ENCODE measurements at regions of chr16 and their contacts with region 1.

Region 1: DNA sequence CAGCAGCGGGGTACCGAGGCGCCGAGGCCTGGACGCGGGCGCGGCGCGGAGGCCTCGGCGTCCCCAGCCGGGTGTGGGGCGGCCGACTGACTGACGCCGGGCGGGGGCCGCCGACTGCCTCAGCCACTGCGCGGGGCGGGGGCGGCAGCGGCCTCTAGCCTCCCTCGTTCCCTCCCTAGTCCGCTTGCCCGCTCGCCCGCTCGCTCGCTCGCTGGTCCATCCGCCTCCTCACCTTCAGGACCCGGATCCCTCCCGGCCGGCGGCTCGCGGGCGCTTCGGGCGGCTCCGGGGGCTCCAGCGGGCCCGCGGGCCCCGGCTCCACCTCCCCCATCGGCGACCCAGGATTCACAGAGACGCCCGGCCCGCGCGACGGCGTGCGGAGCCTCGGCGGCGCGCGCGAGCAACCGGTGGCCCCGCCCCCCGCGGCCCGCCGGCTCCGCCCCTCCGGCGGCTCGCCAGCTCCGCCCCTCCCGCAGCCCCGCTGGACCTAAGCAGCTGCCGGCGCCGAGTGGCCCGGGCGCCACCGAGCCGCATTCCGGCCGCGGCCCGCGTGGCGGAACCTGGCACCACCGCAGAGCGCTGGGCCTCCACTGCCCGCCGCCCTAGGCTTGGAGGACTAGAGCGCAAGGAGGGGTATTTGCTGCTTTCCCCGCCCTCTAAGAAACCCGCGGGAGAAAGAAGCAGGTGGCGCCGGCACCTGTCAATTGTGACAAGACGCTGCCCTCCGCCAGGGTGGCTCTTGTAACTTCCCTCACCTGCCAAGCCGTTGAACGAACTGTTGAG is 773 bp downstream of the PHLPP2 start:
- DNase-seq: peak; percentile 76 to 90
- H3K4me3 ChIP-seq: peak overlapping the region; percentile 62
- H3K4me3 Mint-ChIP-seq: peak overlapping the region; percentile 89
- H3K27ac Mint-ChIP-seq: peak overlapping the region; percentile 27
- H3K4me1 ChIP-seq: peaks cover 21% of the 10 kb centered on the region
- H3K4me1 Mint-ChIP-seq: peaks cover 8% of the 10 kb centered on the region
- H3K27me3 ChIP-seq: no peaks in the 10 kb centered on the region
- H3K27me3 Mint-ChIP-seq: no peaks in the 10 kb centered on the region
- CTCF ChIP-seq: peak in 1 of 2 experiments; percentile 6

Region 2: GRCh38 chr16:71669932-71670536 is 53.7 kb before region 1 on chr16:
- CTCF ChIA-PET with region 1: no interaction called
- POLR2A ChIA-PET with region 1: no interaction called
- intact Hi-C with region 1: loop called (anchors 2 kb)
- DNase-seq: peak in 1 of 2 experiments; percentile 27
- H3K4me3 ChIP-seq: no peak overlapping the region
- H3K4me3 Mint-ChIP-seq: no peak overlapping the region
- H3K27ac Mint-ChIP-seq: peak overlapping the region; percentile 23
- H3K4me1 ChIP-seq: peaks cover 58% of the 10 kb centered on the region
- H3K4me1 Mint-ChIP-seq: peaks cover 45% of the 10 kb centered on the region
- H3K27me3 ChIP-seq: no peaks in the 10 kb centered on the region
- H3K27me3 Mint-ChIP-seq: no peaks in the 10 kb centered on the region
- CTCF ChIP-seq: peak in 1 of 2 experiments; percentile 35

Region 3: GRCh38 chr16:71734511-71734910 is 10.8 kb after region 1 on chr16:
- CTCF ChIA-PET with region 1: no interaction called
- POLR2A ChIA-PET with region 1: interaction called, 4 read pairs
- intact Hi-C with region 1: loop called (anchors 1 kb)
- DNase-seq: peak in 1 of 2 experiments; percentile 50
- H3K4me3 ChIP-seq: no peak overlapping the region
- H3K4me3 Mint-ChIP-seq: peak overlapping the region; percentile 18
- H3K27ac Mint-ChIP-seq: peak overlapping the region; percentile 79
- H3K4me1 ChIP-seq: peaks cover 25% of the 10 kb centered on the region
- H3K4me1 Mint-ChIP-seq: peaks cover 26% of the 10 kb centered on the region
- H3K27me3 ChIP-seq: no peaks in the 10 kb centered on the region
- H3K27me3 Mint-ChIP-seq: no peaks in the 10 kb centered on the region
- CTCF ChIP-seq: no peak

Measured in Caco-2 (cell line).